Activated naive CD4-positive, alpha-beta T cell treated with anti-CD3 and anti-CD28 coated beads for 36 hours (primary cell): ENCODE measurements at regions of chr13 and their contacts with region 1.

Region 1: DNA sequence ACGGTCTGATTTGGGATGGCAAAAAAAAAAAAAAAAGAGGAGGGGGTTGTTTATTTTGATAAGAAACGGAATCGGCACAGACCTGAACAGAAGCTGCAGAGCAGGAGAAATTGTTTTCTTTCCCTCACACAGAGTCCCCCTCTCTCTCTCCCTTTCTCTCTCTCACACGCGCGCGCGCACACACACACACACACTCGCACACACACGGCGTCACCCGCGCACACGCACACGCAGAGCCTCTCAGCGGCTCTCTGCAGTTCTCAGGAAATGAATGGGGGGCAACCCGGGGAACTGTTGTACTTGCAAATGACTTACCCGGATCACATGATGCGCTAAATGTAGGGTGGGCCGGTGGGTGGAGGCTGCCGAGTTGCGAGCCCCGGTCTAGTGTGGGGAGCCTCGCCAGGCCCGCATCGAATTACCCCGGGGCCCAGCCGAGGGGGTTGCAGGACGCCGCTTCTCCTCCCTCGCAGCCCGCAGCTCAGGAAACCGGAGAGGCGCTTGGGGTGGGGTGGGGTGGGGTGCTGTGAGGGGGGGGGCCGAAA is 475 bp downstream of the KLF12 start:
- DNase-seq: peak; percentile 87
- H3K4me3 Mint-ChIP-seq: peak overlapping the region; percentile 91
- H3K27ac Mint-ChIP-seq: peak overlapping the region; percentile 96
- H3K4me1 Mint-ChIP-seq: peaks cover 33% of the 10 kb centered on the region
- H3K27me3 Mint-ChIP-seq: no peaks in the 10 kb centered on the region

Region 2: DNA sequence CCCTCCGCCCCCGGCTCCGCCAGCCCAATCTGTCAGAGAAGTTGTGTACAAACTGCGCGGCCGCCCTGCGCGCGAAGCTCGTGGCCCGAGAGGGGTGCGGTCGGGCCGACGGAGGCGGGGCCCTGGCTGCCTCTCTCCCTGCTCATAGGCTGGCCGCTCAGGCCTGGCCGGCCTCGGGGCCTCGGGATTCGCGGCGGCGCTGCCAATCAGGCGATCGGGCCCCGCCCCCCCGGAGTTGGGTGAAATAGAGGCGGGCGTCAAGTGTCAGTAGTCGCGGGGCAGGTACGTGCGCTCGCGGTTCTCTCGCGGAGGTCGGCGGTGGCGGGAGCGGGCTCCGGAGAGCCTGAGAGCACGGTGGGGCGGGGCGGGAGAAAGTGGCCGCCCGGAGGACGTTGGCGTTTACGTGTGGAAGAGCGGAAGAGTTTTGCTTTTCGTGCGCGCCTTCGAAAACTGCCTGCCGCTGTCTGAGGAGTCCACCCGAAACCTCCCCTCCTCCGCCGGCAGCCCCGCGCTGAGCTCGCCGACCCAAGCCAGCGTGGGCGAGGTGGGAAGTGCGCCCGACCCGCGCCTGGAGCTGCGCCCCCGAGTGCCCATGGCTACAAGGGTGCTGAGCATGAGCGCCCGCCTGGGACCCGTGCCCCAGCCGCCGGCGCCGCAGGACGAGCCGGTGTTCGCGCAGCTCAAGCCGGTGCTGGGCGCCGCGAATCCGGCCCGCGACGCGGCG is 1074.8 kb before region 1 on chr13 and contains the start of gene KLF5:
- CTCF ChIA-PET with region 1: no interaction called
- intact Hi-C with region 1: loop called (anchors 10 kb)
- DNase-seq: peak; percentile 95
- H3K4me3 Mint-ChIP-seq: peak within 1 kb of the TSS; percentile 87
- H3K27ac Mint-ChIP-seq: no peak within 1 kb of the TSS
- H3K4me1 Mint-ChIP-seq: peaks cover 17% of the 10 kb centered on the region
- H3K27me3 Mint-ChIP-seq: peaks cover 22% of the 10 kb centered on the region
- total RNA-seq, gene KLF5: 1.3 to 1.9 TPM

Region 3: GRCh38 chr13:73647417-73647816 is 486.3 kb before region 1 on chr13:
- CTCF ChIA-PET with region 1: no interaction called
- intact Hi-C with region 1: no loop called
- DNase-seq: no peak
- H3K4me3 Mint-ChIP-seq: no peak overlapping the region
- H3K27ac Mint-ChIP-seq: no peak overlapping the region
- H3K4me1 Mint-ChIP-seq: no peaks in the 10 kb centered on the region
- H3K27me3 Mint-ChIP-seq: no peaks in the 10 kb centered on the region

Region 4: GRCh38 chr13:73934215-73934623 is 199.5 kb before region 1 on chr13:
- CTCF ChIA-PET with region 1: no interaction called
- intact Hi-C with region 1: loop called (anchors 1 kb)
- DNase-seq: no peak
- H3K4me3 Mint-ChIP-seq: no peak overlapping the region
- H3K27ac Mint-ChIP-seq: no peak overlapping the region
- H3K4me1 Mint-ChIP-seq: peaks cover 48% of the 10 kb centered on the region
- H3K27me3 Mint-ChIP-seq: no peaks in the 10 kb centered on the region

Region 5: GRCh38 chr13:74062933-74063332 is 70.8 kb before region 1 on chr13:
- CTCF ChIA-PET with region 1: interaction called, 5 read pairs
- intact Hi-C with region 1: loop called (anchors 1 kb)
- DNase-seq: peak; percentile 62
- H3K4me3 Mint-ChIP-seq: peak overlapping the region; percentile 73
- H3K27ac Mint-ChIP-seq: peak overlapping the region; percentile 86
- H3K4me1 Mint-ChIP-seq: peaks cover 78% of the 10 kb centered on the region
- H3K27me3 Mint-ChIP-seq: no peaks in the 10 kb centered on the region

Region 6: GRCh38 chr13:74243637-74244526 is 110.2 kb after region 1 on chr13:
- CTCF ChIA-PET with region 1: no interaction called
- intact Hi-C with region 1: loop called (anchors 1 kb)
- DNase-seq: no peak
- H3K4me3 Mint-ChIP-seq: peak overlapping the region; percentile 48
- H3K27ac Mint-ChIP-seq: peak overlapping the region; percentile 81
- H3K4me1 Mint-ChIP-seq: peaks cover 67% of the 10 kb centered on the region
- H3K27me3 Mint-ChIP-seq: no peaks in the 10 kb centered on the region

Region 7: GRCh38 chr13:75319254-75319653 is 1185.5 kb after region 1 on chr13:
- CTCF ChIA-PET with region 1: no interaction called
- intact Hi-C with region 1: loop called (anchors 2 kb)
- DNase-seq: no peak
- H3K4me3 Mint-ChIP-seq: no peak overlapping the region
- H3K27ac Mint-ChIP-seq: no peak overlapping the region
- H3K4me1 Mint-ChIP-seq: peaks cover 57% of the 10 kb centered on the region
- H3K27me3 Mint-ChIP-seq: no peaks in the 10 kb centered on the region